GM13977 (cell line): ENCODE measurements at regions of chr15 and their contacts with region 1.

Region 1: DNA sequence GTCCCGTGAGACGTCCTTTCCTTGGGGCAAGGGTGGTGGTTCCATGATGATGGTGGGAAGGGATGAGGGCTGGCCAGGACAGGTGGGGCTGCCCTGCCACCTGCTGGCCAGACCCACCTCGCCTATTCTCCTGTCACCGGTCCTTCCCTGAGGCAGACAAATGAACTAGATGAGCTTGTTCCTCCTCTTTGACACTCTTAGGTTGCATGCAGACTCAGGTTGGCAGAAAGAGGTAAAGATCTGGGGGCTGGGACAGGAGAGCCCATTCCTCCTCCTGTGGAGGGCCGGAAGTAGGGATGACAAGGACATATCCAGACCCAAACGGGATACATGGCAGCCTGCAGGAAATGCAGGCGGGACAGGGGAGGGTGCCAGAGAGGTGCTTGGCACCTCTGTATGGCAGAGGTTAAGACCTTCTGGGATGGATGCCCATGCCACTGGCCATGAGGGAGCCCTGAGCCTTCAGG is 38.6 kb downstream of the ACSBG1 start:
- DNase-seq: peak; percentile 85
- CTCF ChIP-seq: peak; percentile 96

Region 2: GRCh38 chr15:78131295-78132061 is 64.3 kb before region 1 on chr15 and contains the start of gene CIB2:
- in situ Hi-C with region 1: loop called (anchors 5 kb)
- DNase-seq: peak; percentile 97
- CTCF ChIP-seq: peak; percentile 96